ENCODE measurements at regions of chr12 and their contacts with region 1.

Region 1: DNA sequence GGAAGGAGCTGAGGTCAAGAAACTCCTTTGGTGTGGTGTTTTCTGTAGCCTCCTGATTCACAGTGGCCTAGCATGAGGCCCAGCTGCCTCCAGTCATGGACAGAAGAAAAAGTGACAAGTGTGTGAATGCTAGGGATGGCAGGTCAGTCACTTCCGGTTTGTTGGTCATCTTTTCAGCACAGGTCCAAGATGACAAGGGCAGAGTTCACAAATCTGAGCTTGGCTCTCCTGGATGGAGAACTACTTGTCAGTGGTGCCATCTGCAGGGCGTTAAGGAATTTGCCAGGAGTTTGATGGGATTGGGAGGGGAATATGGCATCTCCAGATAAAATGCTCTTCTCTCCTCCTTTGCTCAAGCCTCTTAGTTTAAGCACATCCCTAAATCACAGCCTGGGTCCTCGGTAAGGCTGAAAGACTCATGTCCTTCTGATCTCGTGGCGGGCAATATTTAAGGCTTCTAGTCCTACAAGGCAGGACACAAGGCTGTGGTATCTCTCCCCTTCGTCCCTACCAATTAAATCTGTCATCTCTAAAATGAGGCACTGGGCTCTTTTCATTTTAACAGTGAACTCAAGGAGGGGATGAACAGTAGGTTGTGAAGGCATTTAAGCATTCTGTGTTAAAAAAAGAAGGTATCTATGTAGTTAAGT is 10.0 kb downstream of the TUBA1B start:
- DNase-seq: peak; percentile 50 to 84 (median 74)
- H3K4me3 ChIP-seq: no peak overlapping the region
- H3K27ac ChIP-seq: no peak overlapping the region
- H3K4me1 ChIP-seq: peaks cover 0 to 4% of the 10 kb centered on the region in 2 donors
- H3K27me3 ChIP-seq: no peaks in the 10 kb centered on the region
- CTCF ChIP-seq: peak; percentile 35 to 86 (median 72)
- POLR2A ChIP-seq: no peak

Region 2: GRCh38 chr12:49069507-49070346 is 51.4 kb before region 1 on chr12 and contains the start of gene RHEBL1:
- intact Hi-C with region 1: loop called (anchors 10 kb)
- DNase-seq: peak; percentile 98 to 100 (median 99)
- H3K4me3 ChIP-seq: peak within 1 kb of the TSS in 3 of 4 donors; percentile 57 to 85 (median 81)
- H3K27ac ChIP-seq: peak within 1 kb of the TSS in 4 of 5 donors; percentile 41 to 88 (median 79)
- H3K4me1 ChIP-seq: peaks cover 0 to 10% of the 10 kb centered on the region in 2 donors
- H3K27me3 ChIP-seq: no peaks in the 10 kb centered on the region
- CTCF ChIP-seq: no peak
- POLR2A ChIP-seq: peak in 1 of 2 donors; percentile 83
- total RNA-seq, gene RHEBL1: 0.28 to 1.8 (median 0.36) TPM in 5 of 9 donors, not detected in the others

Region 3: DNA sequence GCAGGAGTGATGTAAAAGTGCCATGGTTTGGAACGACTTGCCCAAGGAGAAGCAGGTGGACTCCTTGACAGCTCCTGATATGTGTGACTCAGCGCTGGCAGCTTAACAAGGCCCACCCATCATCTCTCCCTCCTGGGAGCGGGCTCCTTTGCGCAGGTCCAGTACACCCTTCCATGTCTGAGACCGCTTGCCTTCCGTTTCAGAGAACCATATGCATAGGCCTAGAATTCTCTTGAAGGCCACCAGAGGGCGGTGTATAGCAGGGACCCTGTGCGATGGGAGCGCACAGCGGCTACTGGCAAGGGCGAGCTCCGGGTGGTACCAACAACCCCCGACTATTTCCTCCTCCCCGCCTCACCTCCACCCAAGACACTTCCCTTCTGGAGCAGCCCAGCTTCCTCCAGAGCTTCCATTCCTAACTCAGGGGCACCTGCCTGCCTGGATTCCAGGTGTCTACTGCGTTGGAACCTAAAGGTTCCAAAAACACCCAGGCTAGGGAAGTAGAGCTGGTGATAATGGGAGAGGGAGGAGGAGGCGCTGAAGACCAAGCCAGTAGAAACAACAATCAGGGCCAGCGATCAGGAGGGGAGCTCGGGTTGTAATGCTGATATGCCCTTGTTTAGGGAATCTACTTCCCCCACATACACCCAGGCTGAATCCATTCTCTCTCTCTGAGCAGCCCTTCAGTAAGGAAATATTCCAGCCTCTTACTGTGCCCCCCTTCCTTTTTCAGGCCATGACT is 32.8 kb before region 1 on chr12:
- intact Hi-C with region 1: loop called (anchors 5 kb)
- DNase-seq: peak; percentile 74 to 86 (median 79)
- H3K4me3 ChIP-seq: no peak overlapping the region
- H3K27ac ChIP-seq: no peak overlapping the region
- H3K4me1 ChIP-seq: peaks cover 0 to 32% of the 10 kb centered on the region in 2 donors
- H3K27me3 ChIP-seq: peaks cover 13% of the 10 kb centered on the region
- CTCF ChIP-seq: peak; percentile 82 to 89 (median 86)
- POLR2A ChIP-seq: no peak

Region 4: DNA sequence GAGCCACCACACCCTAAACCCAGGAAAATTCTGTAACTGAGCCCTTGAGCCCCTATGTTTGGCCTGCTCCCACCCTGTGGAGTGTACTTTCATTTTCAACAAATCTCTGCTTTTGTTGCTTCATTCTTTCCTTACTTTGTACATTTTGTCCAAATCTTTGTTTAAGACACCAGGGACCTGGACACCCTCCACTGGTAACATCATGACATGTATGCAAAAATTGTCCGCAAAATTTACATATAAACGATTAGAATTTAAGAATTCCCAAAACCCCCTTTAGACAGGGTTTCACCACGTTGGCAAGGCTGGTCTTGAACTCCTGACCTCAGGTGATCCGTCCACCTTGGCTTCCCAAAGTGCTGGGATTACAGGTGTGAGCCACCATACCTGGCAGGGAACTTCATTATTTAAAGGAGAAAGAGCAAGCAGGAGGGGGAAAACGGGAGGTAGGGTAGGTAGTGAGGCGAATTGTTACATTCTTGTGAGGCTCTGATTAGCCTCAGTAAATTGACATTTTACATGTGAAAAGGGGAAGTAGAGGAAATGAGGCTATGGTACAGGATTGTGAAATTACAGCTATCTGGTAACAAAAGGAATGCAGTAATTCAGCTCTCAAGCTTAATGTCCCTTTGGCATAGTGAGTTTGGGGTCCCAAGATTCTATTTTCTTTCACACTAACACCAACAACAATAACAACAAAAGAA is 40.1 kb after region 1 on chr12:
- intact Hi-C with region 1: no loop called
- DNase-seq: no peak
- H3K4me3 ChIP-seq: no peak overlapping the region
- H3K27ac ChIP-seq: no peak overlapping the region
- H3K4me1 ChIP-seq: no peaks in the 10 kb centered on the region
- H3K27me3 ChIP-seq: no peaks in the 10 kb centered on the region
- CTCF ChIP-seq: no peak
- POLR2A ChIP-seq: no peak

Region 5: GRCh38 chr12:49369411-49370145 is 248.4 kb after region 1 on chr12:
- intact Hi-C with region 1: no loop called
- DNase-seq: peak in 5 of 7 donors; percentile 27 to 43 (median 32)
- H3K4me3 ChIP-seq: peak overlapping the region in 1 of 4 donors; percentile 2
- H3K27ac ChIP-seq: peak overlapping the region in 1 of 5 donors; percentile 19
- H3K4me1 ChIP-seq: peaks cover 16 to 36% of the 10 kb centered on the region in 2 donors
- H3K27me3 ChIP-seq: no peaks in the 10 kb centered on the region
- CTCF ChIP-seq: peak; percentile 20 to 38 (median 30)
- POLR2A ChIP-seq: no peak

Region 6: GRCh38 chr12:49730568-49731101 is 609.5 kb after region 1 on chr12:
- intact Hi-C with region 1: no loop called
- DNase-seq: no peak
- H3K4me3 ChIP-seq: no peak overlapping the region
- H3K27ac ChIP-seq: no peak overlapping the region
- H3K4me1 ChIP-seq: no peaks in the 10 kb centered on the region
- H3K27me3 ChIP-seq: no peaks in the 10 kb centered on the region
- CTCF ChIP-seq: no peak
- POLR2A ChIP-seq: no peak

Measured in adrenal gland (tissue), 19 donors.